Activated CD4-positive, alpha-beta T cell treated with anti-CD3 and anti-CD28 coated beads, Interleukin-2, amount 10 ng/mL, durations not matched to agents 24 days and 14 days (primary cell): ENCODE measurements at regions of chr1 and their contacts with region 1.

Region 1: GRCh38 chr1:147627435-147628110 is 42.8 kb downstream of the ACP6 start:
- DNase-seq: peak; percentile 84
- H3K4me3 Mint-ChIP-seq: no peak overlapping the region
- H3K27ac Mint-ChIP-seq: no peak overlapping the region
- H3K4me1 Mint-ChIP-seq: peaks cover 26% of the 10 kb centered on the region
- H3K27me3 Mint-ChIP-seq: no peaks in the 10 kb centered on the region

Region 2: GRCh38 chr1:147515046-147515869 is 112.3 kb before region 1 on chr1:
- intact Hi-C with region 1: loop called (anchors 1 kb)
- DNase-seq: peak; percentile 61
- H3K4me3 Mint-ChIP-seq: no peak overlapping the region
- H3K27ac Mint-ChIP-seq: no peak overlapping the region
- H3K4me1 Mint-ChIP-seq: peaks cover 6% of the 10 kb centered on the region
- H3K27me3 Mint-ChIP-seq: peaks cover 8% of the 10 kb centered on the region

Region 3: DNA sequence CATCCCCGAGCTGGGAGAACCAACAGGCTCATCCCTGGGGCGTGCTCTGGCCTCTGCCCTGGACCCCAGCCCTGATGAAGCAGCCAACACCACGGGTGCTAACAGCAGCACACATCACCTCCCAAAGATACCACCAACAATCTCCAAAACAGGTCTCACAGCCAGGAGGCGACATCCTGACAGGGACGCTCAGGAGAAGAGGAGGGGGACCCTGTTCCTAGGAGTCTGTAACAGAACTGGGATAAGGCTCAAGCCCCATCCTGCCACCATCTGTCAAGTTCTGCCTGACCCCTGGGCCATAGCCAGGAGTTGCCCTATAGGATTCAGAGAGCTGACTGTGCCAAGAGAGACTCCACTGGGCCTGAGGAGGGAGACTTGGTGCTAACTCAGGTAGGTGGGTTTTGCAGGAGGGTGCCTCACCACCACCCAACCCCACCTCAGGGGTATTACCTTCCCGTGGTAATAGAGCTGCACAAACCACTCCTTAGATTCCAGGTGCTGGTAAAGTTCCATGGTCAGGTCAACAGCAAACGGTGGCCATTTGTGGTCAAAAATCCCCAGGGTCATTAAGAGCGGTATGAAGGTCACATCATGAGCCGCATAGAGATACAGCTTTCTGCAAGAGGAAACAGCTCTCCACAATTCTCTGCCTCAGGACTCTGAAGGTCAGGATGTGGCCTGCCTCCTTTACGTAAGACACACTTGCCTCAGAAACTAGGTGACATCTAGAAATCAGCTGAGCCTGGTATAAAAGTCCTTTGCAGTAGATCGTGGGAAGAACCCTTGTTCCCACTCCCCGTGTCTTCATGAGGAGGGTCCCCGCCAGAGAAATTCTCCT is 20.4 kb after region 1 on chr1:
- intact Hi-C with region 1: no loop called
- DNase-seq: peak; percentile 86
- H3K4me3 Mint-ChIP-seq: peak overlapping the region; percentile 67
- H3K27ac Mint-ChIP-seq: peak overlapping the region; percentile 83
- H3K4me1 Mint-ChIP-seq: peaks cover 50% of the 10 kb centered on the region
- H3K27me3 Mint-ChIP-seq: no peaks in the 10 kb centered on the region